CD4-positive, alpha-beta memory T cell (primary cell): ENCODE measurements at regions of chr1 and their contacts with region 1.

Region 1: GRCh38 chr1:86933562-86934377 is 19.3 kb downstream of the HS2ST1 start:
- DNase-seq: peak in 1 of 5 donors; percentile 3
- H3K4me3 ChIP-seq: no peak overlapping the region
- H3K4me3 Mint-ChIP-seq: peak overlapping the region in 1 of 8 donors; percentile 31
- H3K27ac ChIP-seq: no peak overlapping the region
- H3K27ac Mint-ChIP-seq: peak overlapping the region in 3 of 7 donors; percentile 22 to 68 (median 25)
- H3K4me1 ChIP-seq: peaks cover 8% of the 10 kb centered on the region
- H3K4me1 Mint-ChIP-seq: peaks cover 13 to 27% (median 18%) of the 10 kb centered on the region in 4 donors
- H3K27me3 ChIP-seq: no peaks in the 10 kb centered on the region
- H3K27me3 Mint-ChIP-seq: no peaks in the 10 kb centered on the region

Region 2: GRCh38 chr1:86887479-86888162 is 46.1 kb before region 1 on chr1:
- CTCF ChIA-PET with region 1: no interaction called
- POLR2A ChIA-PET with region 1: no interaction called
- intact Hi-C with region 1: loop called (anchors 10 kb)
- DNase-seq: no peak
- H3K4me3 ChIP-seq: no peak overlapping the region
- H3K4me3 Mint-ChIP-seq: no peak overlapping the region
- H3K27ac ChIP-seq: no peak overlapping the region
- H3K27ac Mint-ChIP-seq: peak overlapping the region in 2 of 7 donors; percentile 32 to 36
- H3K4me1 ChIP-seq: peaks cover 8% of the 10 kb centered on the region
- H3K4me1 Mint-ChIP-seq: peaks cover 18 to 33% (median 25%) of the 10 kb centered on the region in 4 donors
- H3K27me3 ChIP-seq: no peaks in the 10 kb centered on the region
- H3K27me3 Mint-ChIP-seq: no peaks in the 10 kb centered on the region

Region 3: DNA sequence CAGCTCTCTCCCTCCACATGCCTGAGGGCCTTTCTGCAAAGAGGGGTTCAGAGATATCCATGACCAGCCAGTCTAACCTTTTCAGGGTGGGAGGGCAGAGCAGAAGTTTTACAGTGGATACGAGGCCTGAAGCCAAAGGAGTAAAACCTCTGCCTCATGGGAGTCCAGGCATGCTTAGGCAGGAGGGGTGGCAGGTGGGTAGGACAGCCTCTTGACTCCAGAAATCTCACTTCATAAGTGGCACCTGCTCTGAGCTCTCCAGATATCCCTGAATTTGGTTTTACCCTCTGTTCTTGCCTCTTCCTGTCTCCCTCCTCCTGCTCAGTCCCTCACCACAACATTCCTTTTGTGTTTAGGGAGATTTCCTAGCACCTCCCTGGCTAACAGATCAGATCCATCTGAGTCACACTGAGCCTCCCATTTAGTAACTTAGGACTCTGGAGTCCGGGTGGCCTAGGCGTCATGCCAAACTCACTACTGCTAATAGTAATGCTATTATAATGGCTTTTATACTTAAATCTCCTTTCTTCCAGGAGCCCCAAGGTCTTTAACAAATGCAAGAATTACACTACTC is 181.6 kb after region 1 on chr1:
- CTCF ChIA-PET with region 1: no interaction called
- POLR2A ChIA-PET with region 1: no interaction called
- intact Hi-C with region 1: no loop called
- DNase-seq: no peak
- H3K4me3 ChIP-seq: no peak overlapping the region
- H3K4me3 Mint-ChIP-seq: no peak overlapping the region
- H3K27ac ChIP-seq: no peak overlapping the region
- H3K27ac Mint-ChIP-seq: peak overlapping the region in 2 of 7 donors; percentile 39 to 48
- H3K4me1 ChIP-seq: no peaks in the 10 kb centered on the region
- H3K4me1 Mint-ChIP-seq: no peaks in the 10 kb centered on the region
- H3K27me3 ChIP-seq: no peaks in the 10 kb centered on the region
- H3K27me3 Mint-ChIP-seq: no peaks in the 10 kb centered on the region